ENCODE measurements at regions of chr6 and their contacts with region 1.

Region 1: GRCh38 chr6:32933636-32934085 is 7.2 kb downstream of the HLA-DMB start:
- DNase-seq: peak; percentile 61 to 88 (median 74)
- ATAC-seq: peak; percentile 68
- H3K4me3 ChIP-seq: no peak overlapping the region
- H3K4me3 Mint-ChIP-seq: no peak overlapping the region
- H3K27ac ChIP-seq: no peak overlapping the region
- H3K27ac Mint-ChIP-seq: no peak overlapping the region
- H3K4me1 ChIP-seq: no peaks in the 10 kb centered on the region
- H3K4me1 Mint-ChIP-seq: peaks cover 6% of the 10 kb centered on the region
- H3K27me3 ChIP-seq: no peaks in the 10 kb centered on the region
- H3K27me3 Mint-ChIP-seq: no peaks in the 10 kb centered on the region
- CTCF ChIP-seq: peak; percentile 84

Region 2: DNA sequence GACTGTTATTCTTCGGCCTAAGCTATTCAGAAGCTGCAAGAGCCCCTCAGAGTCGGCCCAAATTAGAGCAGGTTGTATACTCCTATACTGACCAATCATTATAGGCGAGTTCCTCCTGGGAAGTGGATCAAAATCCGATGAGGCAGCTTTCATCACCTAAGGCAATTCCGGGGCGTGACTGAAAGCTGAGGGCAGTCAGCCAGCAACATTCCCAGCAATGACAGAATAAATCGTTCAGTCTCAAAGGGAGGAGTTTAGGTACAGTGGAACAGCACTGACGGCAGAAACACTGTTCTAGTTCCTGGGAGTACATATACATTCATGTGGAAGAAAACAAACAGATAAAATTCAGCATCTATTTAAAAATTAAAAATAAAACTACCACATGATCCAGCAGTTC is 181.1 kb before region 1 on chr6:
- CTCF ChIA-PET with region 1: no interaction called
- POLR2A ChIA-PET with region 1: no interaction called
- intact Hi-C with region 1: no loop called
- DNase-seq: no peak
- ATAC-seq: no peak
- H3K4me3 ChIP-seq: no peak overlapping the region
- H3K4me3 Mint-ChIP-seq: no peak overlapping the region
- H3K27ac ChIP-seq: no peak overlapping the region
- H3K27ac Mint-ChIP-seq: no peak overlapping the region
- H3K4me1 ChIP-seq: no peaks in the 10 kb centered on the region
- H3K4me1 Mint-ChIP-seq: no peaks in the 10 kb centered on the region
- H3K27me3 ChIP-seq: peaks cover 0 to 18% of the 10 kb centered on the region in 2 experiments
- H3K27me3 Mint-ChIP-seq: peaks cover 48% of the 10 kb centered on the region
- CTCF ChIP-seq: no peak

Region 3: DNA sequence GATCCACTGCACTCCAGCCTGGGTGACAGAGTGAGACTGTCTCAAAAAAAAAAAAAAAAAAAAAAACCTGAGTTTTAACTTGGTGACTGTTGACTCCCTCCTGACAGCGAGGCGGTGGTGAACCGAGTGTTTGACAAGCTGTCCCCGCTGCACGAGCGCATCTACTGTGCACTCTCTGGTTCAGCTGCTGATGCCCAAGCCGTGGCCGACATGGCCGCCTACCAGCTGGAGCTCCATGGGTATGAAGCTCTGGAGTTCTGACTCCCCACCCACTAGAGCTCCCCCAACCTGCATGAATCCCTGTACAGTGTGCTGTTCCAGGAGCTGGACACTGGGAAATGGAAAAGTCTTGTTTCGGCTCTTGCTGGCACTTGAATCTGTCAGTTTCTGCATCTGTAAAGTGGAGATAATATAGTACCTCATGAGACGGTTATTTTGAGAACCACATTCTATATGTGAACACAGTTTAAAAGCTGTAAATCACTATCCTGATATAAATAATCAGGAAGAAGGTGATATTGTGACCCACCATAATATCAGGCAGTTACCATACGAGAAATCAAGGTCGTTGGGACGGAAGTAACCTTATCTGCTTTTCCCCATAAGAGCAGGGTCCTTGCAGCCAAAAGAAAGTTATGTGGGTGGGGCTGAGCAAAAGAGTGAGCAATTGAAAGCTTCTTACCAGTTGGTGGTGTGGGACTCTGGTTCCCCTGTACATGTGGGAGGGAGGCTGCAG is 76.3 kb before region 1 on chr6:
- CTCF ChIA-PET with region 1: no interaction called
- POLR2A ChIA-PET with region 1: no interaction called
- intact Hi-C with region 1: no loop called
- DNase-seq: no peak
- ATAC-seq: no peak
- H3K4me3 ChIP-seq: no peak overlapping the region
- H3K4me3 Mint-ChIP-seq: peak overlapping the region; percentile 22
- H3K27ac ChIP-seq: peak overlapping the region in 1 of 2 donors; percentile 23
- H3K27ac Mint-ChIP-seq: peak overlapping the region; percentile 68
- H3K4me1 ChIP-seq: peaks cover 43% of the 10 kb centered on the region
- H3K4me1 Mint-ChIP-seq: peaks cover 57% of the 10 kb centered on the region
- H3K27me3 ChIP-seq: no peaks in the 10 kb centered on the region
- H3K27me3 Mint-ChIP-seq: no peaks in the 10 kb centered on the region
- CTCF ChIP-seq: no peak

Region 4: DNA sequence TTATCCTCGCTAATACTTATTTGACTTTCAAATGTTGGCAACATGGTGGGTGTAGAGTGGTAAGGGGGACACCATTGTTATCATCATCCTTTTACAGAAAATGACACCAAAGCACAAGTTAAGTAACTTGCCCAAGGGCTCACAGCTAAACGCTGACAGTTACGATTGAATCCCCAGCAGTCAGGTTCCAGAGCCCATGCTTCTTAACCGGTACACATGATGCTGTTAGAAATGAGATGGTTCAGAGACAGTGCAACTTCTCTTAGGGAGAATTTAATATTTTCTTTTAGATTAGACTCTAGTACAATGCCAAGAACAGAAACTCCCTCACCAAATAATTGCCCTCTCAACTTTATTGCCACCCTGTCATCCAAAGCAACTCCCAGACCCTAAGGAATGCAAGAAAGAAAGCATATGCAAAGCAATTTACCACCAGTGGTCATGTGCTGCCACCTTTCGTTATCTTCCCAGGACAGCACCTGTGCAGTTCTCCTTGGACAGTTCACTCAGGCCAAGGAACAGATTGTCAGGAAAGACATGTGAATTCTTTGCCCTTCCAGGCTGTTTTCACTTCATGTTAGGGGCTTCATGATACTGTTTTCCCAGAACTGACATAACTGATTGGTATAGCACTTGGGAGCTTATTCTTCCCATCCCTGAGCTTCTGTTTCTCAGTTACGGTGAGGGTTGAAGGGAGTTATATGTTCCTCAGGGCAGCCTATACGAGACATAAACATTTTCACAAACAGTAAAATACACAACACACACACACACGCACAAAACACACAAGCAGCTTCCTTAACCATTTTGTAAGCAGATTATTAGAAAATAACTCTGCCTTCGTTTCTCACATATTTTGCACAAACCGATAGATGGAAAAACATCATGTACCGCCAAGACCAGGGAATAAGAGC is 14.1 kb after region 1 on chr6:
- CTCF ChIA-PET with region 1: interaction called, 65 read pairs
- POLR2A ChIA-PET with region 1: interaction called, 19 read pairs
- intact Hi-C with region 1: loop called (anchors 1 kb)
- DNase-seq: peak in 11 of 14 experiments; percentile 19 to 79 (median 32)
- ATAC-seq: peak; percentile 33
- H3K4me3 ChIP-seq: no peak overlapping the region
- H3K4me3 Mint-ChIP-seq: no peak overlapping the region
- H3K27ac ChIP-seq: no peak overlapping the region
- H3K27ac Mint-ChIP-seq: no peak overlapping the region
- H3K4me1 ChIP-seq: peaks cover 43% of the 10 kb centered on the region
- H3K4me1 Mint-ChIP-seq: peaks cover 72% of the 10 kb centered on the region
- H3K27me3 ChIP-seq: no peaks in the 10 kb centered on the region
- H3K27me3 Mint-ChIP-seq: no peaks in the 10 kb centered on the region
- CTCF ChIP-seq: peak; percentile 77